Caco-2 (cell line): ENCODE measurements at regions of chr6 and their contacts with region 1.

Region 1: GRCh38 chr6:37284781-37285180 is 26.8 kb upstream of the TMEM217 start:
- DNase-seq: no peak
- H3K4me3 ChIP-seq: no peak overlapping the region
- H3K4me3 Mint-ChIP-seq: no peak overlapping the region
- H3K27ac Mint-ChIP-seq: no peak overlapping the region
- H3K4me1 ChIP-seq: no peaks in the 10 kb centered on the region
- H3K4me1 Mint-ChIP-seq: no peaks in the 10 kb centered on the region
- H3K27me3 ChIP-seq: no peaks in the 10 kb centered on the region
- H3K27me3 Mint-ChIP-seq: no peaks in the 10 kb centered on the region
- CTCF ChIP-seq: no peak

Region 2: GRCh38 chr6:37459981-37460800 is 175.4 kb after region 1 on chr6:
- CTCF ChIA-PET with region 1: no interaction called
- POLR2A ChIA-PET with region 1: no interaction called
- intact Hi-C with region 1: no loop called
- DNase-seq: no peak
- H3K4me3 ChIP-seq: no peak overlapping the region
- H3K4me3 Mint-ChIP-seq: no peak overlapping the region
- H3K27ac Mint-ChIP-seq: no peak overlapping the region
- H3K4me1 ChIP-seq: no peaks in the 10 kb centered on the region
- H3K4me1 Mint-ChIP-seq: no peaks in the 10 kb centered on the region
- H3K27me3 ChIP-seq: no peaks in the 10 kb centered on the region
- H3K27me3 Mint-ChIP-seq: no peaks in the 10 kb centered on the region
- CTCF ChIP-seq: no peak

Region 3: GRCh38 chr6:37507690-37508421 is 223.1 kb after region 1 on chr6:
- CTCF ChIA-PET with region 1: no interaction called
- POLR2A ChIA-PET with region 1: interaction called, 11 read pairs
- intact Hi-C with region 1: no loop called
- DNase-seq: peak; percentile 65 to 77
- H3K4me3 ChIP-seq: peak overlapping the region; percentile 21
- H3K4me3 Mint-ChIP-seq: peak overlapping the region; percentile 48
- H3K27ac Mint-ChIP-seq: peak overlapping the region; percentile 53
- H3K4me1 ChIP-seq: peaks cover 53% of the 10 kb centered on the region
- H3K4me1 Mint-ChIP-seq: peaks cover 35% of the 10 kb centered on the region
- H3K27me3 ChIP-seq: no peaks in the 10 kb centered on the region
- H3K27me3 Mint-ChIP-seq: no peaks in the 10 kb centered on the region
- CTCF ChIP-seq: no peak